PC-9 (cell line): ENCODE measurements at regions of chr3 and their contacts with region 1.

Region 1: GRCh38 chr3:194070634-194071409 is 65.1 kb upstream of the HES1 start:
- DNase-seq: peak; percentile 92 to 97
- H3K4me3 ChIP-seq: peak overlapping the region; percentile 59; the same call in 1 of the 2 replicates
- H3K27ac ChIP-seq: peak overlapping the region; percentile 74
- H3K4me1 ChIP-seq: peaks cover 47% of the 10 kb centered on the region
- H3K27me3 ChIP-seq: no peaks in the 10 kb centered on the region
- CTCF ChIP-seq: no peak

Region 2: DNA sequence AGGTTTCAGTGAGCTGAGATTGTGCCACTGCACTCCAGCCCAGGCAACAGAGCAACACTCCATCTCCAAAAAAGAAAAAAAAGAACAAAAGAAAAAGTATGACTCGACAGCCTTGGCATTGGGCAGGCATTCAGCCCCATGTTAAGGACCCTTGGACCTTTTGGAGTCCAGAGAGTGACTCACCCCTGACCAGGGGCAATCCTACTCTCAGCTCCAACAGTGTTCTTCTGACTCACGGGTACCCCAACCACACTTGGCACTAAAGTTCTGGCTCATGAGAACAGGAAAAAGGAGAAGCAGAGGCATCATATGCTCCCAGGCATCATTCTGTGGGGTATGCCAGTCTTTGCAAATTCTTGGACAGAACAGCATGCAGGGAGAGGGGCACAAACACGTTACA is 187.3 kb before region 1 on chr3:
- CTCF ChIA-PET with region 1: no interaction called
- POLR2A ChIA-PET with region 1: no interaction called
- intact Hi-C with region 1: loop called (anchors 1 kb)
- DNase-seq: peak; percentile 58 to 85
- H3K4me3 ChIP-seq: no peak overlapping the region
- H3K27ac ChIP-seq: peak overlapping the region; percentile 81
- H3K4me1 ChIP-seq: peaks cover 88% of the 10 kb centered on the region
- H3K27me3 ChIP-seq: no peaks in the 10 kb centered on the region
- CTCF ChIP-seq: no peak

Region 3: GRCh38 chr3:194019398-194020165 is 51.2 kb before region 1 on chr3:
- CTCF ChIA-PET with region 1: no interaction called
- POLR2A ChIA-PET with region 1: no interaction called
- intact Hi-C with region 1: no loop called
- DNase-seq: no peak
- H3K4me3 ChIP-seq: no peak overlapping the region
- H3K27ac ChIP-seq: no peak overlapping the region
- H3K4me1 ChIP-seq: peaks cover 14% of the 10 kb centered on the region
- H3K27me3 ChIP-seq: no peaks in the 10 kb centered on the region
- CTCF ChIP-seq: no peak

Region 4: GRCh38 chr3:194030369-194030768 is 40.5 kb before region 1 on chr3:
- CTCF ChIA-PET with region 1: no interaction called
- POLR2A ChIA-PET with region 1: interaction called, 3 read pairs
- intact Hi-C with region 1: loop called (anchors 2 kb)
- DNase-seq: peak; percentile 69 to 88
- H3K4me3 ChIP-seq: no peak overlapping the region
- H3K27ac ChIP-seq: peak overlapping the region; percentile 40
- H3K4me1 ChIP-seq: peaks cover 53% of the 10 kb centered on the region
- H3K27me3 ChIP-seq: no peaks in the 10 kb centered on the region
- CTCF ChIP-seq: no peak

Region 5: DNA sequence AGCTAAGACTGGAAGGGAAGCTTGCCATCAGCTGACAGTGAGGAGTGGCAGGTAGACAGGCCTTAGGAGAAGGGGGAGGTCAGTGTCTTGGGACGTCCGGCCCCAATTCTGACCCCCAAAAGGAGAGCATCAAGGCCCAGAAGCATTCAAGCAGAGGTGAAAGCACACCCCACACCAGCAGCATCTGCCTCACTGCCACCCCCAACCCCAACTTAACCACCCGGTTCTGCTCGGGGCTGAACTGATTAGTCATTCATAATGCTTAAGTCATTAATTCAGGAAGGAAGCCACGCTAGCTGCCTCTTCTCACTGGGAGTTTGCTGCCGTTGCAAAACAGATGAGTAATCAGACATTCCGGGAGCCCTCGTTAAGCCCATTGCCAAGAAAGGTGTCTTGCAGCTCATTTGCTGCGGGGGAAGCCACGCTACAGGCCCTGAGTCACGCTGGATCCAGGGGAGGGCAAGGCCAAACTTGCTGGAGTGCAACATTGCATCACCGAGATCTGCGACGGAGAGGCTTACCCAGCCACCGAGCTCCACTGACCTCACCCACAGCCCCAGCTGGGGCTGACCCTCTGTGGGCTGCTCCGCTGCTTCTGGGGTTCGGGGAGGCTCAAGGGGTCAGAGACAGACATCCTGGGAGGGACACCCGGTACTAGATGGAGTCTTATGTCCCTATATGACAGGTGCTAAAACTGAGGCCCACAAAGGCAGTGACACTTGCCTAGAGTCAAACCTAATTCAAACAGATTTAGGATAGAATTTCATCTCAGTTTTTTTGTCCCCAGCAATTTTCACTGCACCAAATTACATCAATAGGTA is 18.7 kb after region 1 on chr3:
- CTCF ChIA-PET with region 1: interaction called, 4 read pairs
- POLR2A ChIA-PET with region 1: interaction called, 4 read pairs
- intact Hi-C with region 1: loop called (anchors 1 kb)
- DNase-seq: peak; percentile 98 to 100
- H3K4me3 ChIP-seq: peak overlapping the region; percentile 16; the same call in 1 of the 2 replicates
- H3K27ac ChIP-seq: peak overlapping the region; percentile 98
- H3K4me1 ChIP-seq: peaks cover 48% of the 10 kb centered on the region
- H3K27me3 ChIP-seq: no peaks in the 10 kb centered on the region
- CTCF ChIP-seq: no peak

Region 6: GRCh38 chr3:194112120-194113106 is 41.6 kb after region 1 on chr3:
- CTCF ChIA-PET with region 1: no interaction called
- POLR2A ChIA-PET with region 1: no interaction called
- intact Hi-C with region 1: loop called (anchors 1 kb)
- DNase-seq: peak; percentile 85 to 100
- H3K4me3 ChIP-seq: peak overlapping the region; percentile 2; the same call in 1 of the 2 replicates
- H3K27ac ChIP-seq: peak overlapping the region; percentile 38
- H3K4me1 ChIP-seq: peaks cover 18% of the 10 kb centered on the region
- H3K27me3 ChIP-seq: no peaks in the 10 kb centered on the region
- CTCF ChIP-seq: no peak

Region 7: GRCh38 chr3:194120789-194121770 is 50.3 kb after region 1 on chr3:
- CTCF ChIA-PET with region 1: interaction called, 13 read pairs
- POLR2A ChIA-PET with region 1: no interaction called
- intact Hi-C with region 1: no loop called
- DNase-seq: no peak
- H3K4me3 ChIP-seq: no peak overlapping the region
- H3K27ac ChIP-seq: no peak overlapping the region
- H3K4me1 ChIP-seq: peaks cover 28% of the 10 kb centered on the region
- H3K27me3 ChIP-seq: no peaks in the 10 kb centered on the region
- CTCF ChIP-seq: no peak

Region 8: GRCh38 chr3:194277104-194277785 is 206.4 kb after region 1 on chr3:
- CTCF ChIA-PET with region 1: no interaction called
- POLR2A ChIA-PET with region 1: no interaction called
- intact Hi-C with region 1: no loop called
- DNase-seq: no peak
- H3K4me3 ChIP-seq: no peak overlapping the region
- H3K27ac ChIP-seq: no peak overlapping the region
- H3K4me1 ChIP-seq: peaks cover 50% of the 10 kb centered on the region
- H3K27me3 ChIP-seq: no peaks in the 10 kb centered on the region
- CTCF ChIP-seq: no peak

Region 9: GRCh38 chr3:194323785-194324735 is 253.2 kb after region 1 on chr3:
- CTCF ChIA-PET with region 1: no interaction called
- POLR2A ChIA-PET with region 1: no interaction called
- intact Hi-C with region 1: loop called (anchors 5 kb)
- DNase-seq: peak; percentile 60 to 72
- H3K4me3 ChIP-seq: no peak overlapping the region
- H3K27ac ChIP-seq: peak overlapping the region; percentile 98
- H3K4me1 ChIP-seq: peaks cover 39% of the 10 kb centered on the region
- H3K27me3 ChIP-seq: no peaks in the 10 kb centered on the region
- CTCF ChIP-seq: no peak